Caco-2 (cell line): ENCODE measurements at regions of chr2 and their contacts with region 1.

Region 1: DNA sequence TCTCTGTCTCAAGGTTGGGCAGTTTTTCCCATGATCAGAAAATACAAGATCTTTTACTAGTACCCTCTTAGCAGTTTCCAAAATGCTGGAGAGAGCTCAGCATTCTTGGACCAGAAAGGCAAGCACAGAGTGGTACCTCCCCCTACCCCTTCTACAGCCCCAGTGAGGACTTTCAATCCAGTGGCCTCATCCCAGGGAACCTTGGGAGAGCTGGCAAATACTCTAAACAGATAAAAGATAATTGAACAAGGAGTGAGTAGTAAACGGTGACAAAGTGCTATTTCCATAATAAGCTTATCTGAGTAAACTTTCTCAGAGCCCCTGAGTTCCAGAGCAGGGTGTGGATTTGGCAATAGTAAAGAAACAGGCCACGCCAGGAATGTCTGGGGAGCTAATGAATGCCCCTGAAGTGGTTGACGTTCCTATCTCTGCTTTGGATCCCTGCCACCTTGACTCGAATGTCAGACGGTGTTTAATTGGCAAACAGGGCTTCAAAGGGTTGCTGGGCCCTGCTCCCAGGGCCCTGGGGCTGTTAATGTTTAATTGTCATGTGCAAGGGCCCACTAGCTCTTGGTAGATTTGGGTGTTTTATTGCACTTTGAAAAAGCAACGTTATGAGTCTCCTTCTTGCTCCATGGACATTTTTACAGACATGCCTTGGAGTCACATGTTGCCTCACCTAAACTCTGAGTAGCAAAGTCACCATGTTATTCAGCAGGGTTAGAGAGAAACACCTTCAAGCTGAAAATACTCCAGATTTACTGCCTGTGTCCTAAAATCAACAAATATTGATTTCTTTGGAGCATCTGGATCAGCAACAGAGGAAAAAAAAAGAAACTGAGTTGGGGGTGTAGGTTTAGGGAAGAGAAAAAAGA is 239.9 kb downstream of the CYRIA start:
- DNase-seq: peak; percentile 97 to 99
- H3K4me3 ChIP-seq: no peak overlapping the region
- H3K4me3 Mint-ChIP-seq: peak overlapping the region; percentile 55
- H3K27ac Mint-ChIP-seq: peak overlapping the region; percentile 99
- H3K4me1 ChIP-seq: peaks cover 46% of the 10 kb centered on the region
- H3K4me1 Mint-ChIP-seq: peaks cover 58% of the 10 kb centered on the region
- H3K27me3 ChIP-seq: no peaks in the 10 kb centered on the region
- H3K27me3 Mint-ChIP-seq: no peaks in the 10 kb centered on the region
- CTCF ChIP-seq: no peak

Region 2: GRCh38 chr2:15636972-15637785 is 788.5 kb before region 1 on chr2:
- CTCF ChIA-PET with region 1: no interaction called
- POLR2A ChIA-PET with region 1: no interaction called
- intact Hi-C with region 1: loop called (anchors 1 kb)
- DNase-seq: peak; percentile 72 to 80
- H3K4me3 ChIP-seq: no peak overlapping the region
- H3K4me3 Mint-ChIP-seq: no peak overlapping the region
- H3K27ac Mint-ChIP-seq: no peak overlapping the region
- H3K4me1 ChIP-seq: peaks cover 55% of the 10 kb centered on the region
- H3K4me1 Mint-ChIP-seq: peaks cover 32% of the 10 kb centered on the region
- H3K27me3 ChIP-seq: no peaks in the 10 kb centered on the region
- H3K27me3 Mint-ChIP-seq: no peaks in the 10 kb centered on the region
- CTCF ChIP-seq: peak; percentile 85 to 98

Region 3: GRCh38 chr2:15782009-15782751 is 643.5 kb before region 1 on chr2:
- CTCF ChIA-PET with region 1: no interaction called
- POLR2A ChIA-PET with region 1: interaction called, 3 read pairs
- intact Hi-C with region 1: loop called (anchors 1 kb)
- DNase-seq: peak; percentile 92 to 95
- H3K4me3 ChIP-seq: no peak overlapping the region
- H3K4me3 Mint-ChIP-seq: peak overlapping the region; percentile 31
- H3K27ac Mint-ChIP-seq: peak overlapping the region; percentile 17
- H3K4me1 ChIP-seq: peaks cover 44% of the 10 kb centered on the region
- H3K4me1 Mint-ChIP-seq: peaks cover 45% of the 10 kb centered on the region
- H3K27me3 ChIP-seq: no peaks in the 10 kb centered on the region
- H3K27me3 Mint-ChIP-seq: no peaks in the 10 kb centered on the region
- CTCF ChIP-seq: no peak

Region 4: DNA sequence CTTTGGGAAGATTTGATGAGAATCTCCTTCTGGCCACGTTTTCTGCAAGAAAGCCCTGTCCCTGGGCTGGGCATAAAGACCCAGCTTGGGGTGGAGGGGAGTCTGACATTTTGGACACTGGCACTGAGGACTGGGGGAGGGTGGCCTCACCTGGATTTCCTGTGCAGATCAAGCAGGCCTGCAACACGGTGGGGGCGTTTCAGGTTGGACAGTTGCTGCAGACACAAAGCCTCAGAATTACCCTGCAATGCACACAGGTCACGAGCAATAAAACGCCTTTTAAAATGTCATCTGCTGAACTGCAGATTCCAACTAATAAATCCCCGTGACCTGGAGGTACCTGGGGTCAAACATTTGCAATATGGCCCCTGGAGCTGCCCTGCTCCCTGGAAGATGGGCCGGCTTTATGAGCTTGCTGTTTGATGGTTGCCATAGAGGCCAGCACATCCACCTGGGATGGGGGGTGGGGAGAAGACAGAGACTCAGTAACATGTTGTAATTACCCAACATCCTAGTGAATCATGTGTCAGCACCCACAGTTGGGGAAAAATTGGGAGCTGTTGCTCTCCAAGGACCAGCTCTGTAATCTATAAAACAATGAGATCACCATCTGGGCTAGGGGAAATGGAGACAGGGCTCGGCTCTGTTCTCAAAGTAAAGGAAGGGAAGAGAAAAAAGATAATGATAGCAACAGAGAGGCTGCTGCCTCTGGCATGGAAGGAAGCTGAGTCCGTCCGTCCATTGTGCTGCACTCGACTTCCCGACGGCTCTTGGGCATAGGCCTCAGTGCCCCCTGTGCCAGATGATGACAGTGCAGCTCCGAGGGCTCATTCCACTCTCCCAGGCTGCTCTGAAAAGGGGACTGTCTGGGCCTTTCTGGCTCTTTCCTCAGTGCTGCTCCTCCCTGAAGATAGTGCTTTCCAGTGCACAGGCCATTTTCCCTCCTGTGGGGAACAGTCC is 100.4 kb before region 1 on chr2:
- CTCF ChIA-PET with region 1: interaction called, 3 read pairs
- POLR2A ChIA-PET with region 1: interaction called, 9 read pairs
- intact Hi-C with region 1: loop called (anchors 1 kb)
- DNase-seq: peak; percentile 86 to 90
- H3K4me3 ChIP-seq: no peak overlapping the region
- H3K4me3 Mint-ChIP-seq: peak overlapping the region; percentile 1
- H3K27ac Mint-ChIP-seq: peak overlapping the region; percentile 90
- H3K4me1 ChIP-seq: peaks cover 81% of the 10 kb centered on the region
- H3K4me1 Mint-ChIP-seq: peaks cover 78% of the 10 kb centered on the region
- H3K27me3 ChIP-seq: no peaks in the 10 kb centered on the region
- H3K27me3 Mint-ChIP-seq: no peaks in the 10 kb centered on the region
- CTCF ChIP-seq: no peak

Region 5: DNA sequence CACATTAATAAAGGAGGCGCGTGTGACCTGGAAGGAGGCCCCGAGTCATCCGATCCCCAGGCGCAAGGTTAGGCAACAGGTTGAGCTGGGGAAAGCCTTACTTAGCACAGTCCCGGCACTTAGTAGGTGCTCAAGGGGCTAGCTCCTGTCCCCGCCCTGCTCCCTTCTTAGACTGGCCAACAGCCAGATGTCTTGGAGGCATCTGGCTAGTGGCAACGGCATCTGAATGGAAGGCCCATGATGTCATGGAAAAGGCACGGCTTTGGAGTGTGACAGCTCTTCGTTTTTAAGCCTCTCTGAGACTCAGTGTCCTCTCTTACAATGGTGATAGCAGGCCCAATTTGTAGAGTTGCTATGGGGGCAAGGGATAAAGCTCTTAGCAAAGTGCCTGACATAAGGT is 18.3 kb before region 1 on chr2:
- CTCF ChIA-PET with region 1: interaction called, 4 read pairs
- POLR2A ChIA-PET with region 1: interaction called, 5 read pairs
- intact Hi-C with region 1: loop called (anchors 1 kb)
- DNase-seq: no peak
- H3K4me3 ChIP-seq: no peak overlapping the region
- H3K4me3 Mint-ChIP-seq: no peak overlapping the region
- H3K27ac Mint-ChIP-seq: no peak overlapping the region
- H3K4me1 ChIP-seq: peaks cover 46% of the 10 kb centered on the region
- H3K4me1 Mint-ChIP-seq: peaks cover 43% of the 10 kb centered on the region
- H3K27me3 ChIP-seq: no peaks in the 10 kb centered on the region
- H3K27me3 Mint-ChIP-seq: no peaks in the 10 kb centered on the region
- CTCF ChIP-seq: no peak

Region 6: GRCh38 chr2:16487686-16488085 is 62.0 kb after region 1 on chr2:
- CTCF ChIA-PET with region 1: interaction called, 4 read pairs
- POLR2A ChIA-PET with region 1: no interaction called
- intact Hi-C with region 1: loop called (anchors 1 kb)
- DNase-seq: peak; percentile 42 to 50
- H3K4me3 ChIP-seq: no peak overlapping the region
- H3K4me3 Mint-ChIP-seq: no peak overlapping the region
- H3K27ac Mint-ChIP-seq: peak overlapping the region; percentile 31
- H3K4me1 ChIP-seq: no peaks in the 10 kb centered on the region
- H3K4me1 Mint-ChIP-seq: peaks cover 16% of the 10 kb centered on the region
- H3K27me3 ChIP-seq: no peaks in the 10 kb centered on the region
- H3K27me3 Mint-ChIP-seq: no peaks in the 10 kb centered on the region
- CTCF ChIP-seq: peak; percentile 34 to 59